ENCODE measurements at regions of chr1 and their contacts with region 1.

Region 1: GRCh38 chr1:153510984-153511410 is 24.8 kb downstream of the S100A6 start:
- DNase-seq: peak; percentile 89
- H3K4me3 ChIP-seq: no peak overlapping the region; a peak in 1 of 4 replicates
- H3K27ac ChIP-seq: peak overlapping the region in 1 of 2 experiments; percentile 9; a peak in 1 of 4 replicates
- H3K4me1 ChIP-seq: peaks cover 4 to 20% of the 10 kb centered on the region in 2 experiments; a peak in 3 of 4 replicates
- H3K27me3 ChIP-seq: no peaks in the 10 kb centered on the region
- CTCF ChIP-seq: peak; percentile 95
- EP300 ChIP-seq: no peak
- RAD21 ChIP-seq: peak; percentile 96

Region 2: GRCh38 chr1:153390938-153391710 is 119.9 kb before region 1 on chr1 and contains the start of gene S100A8:
- CTCF ChIA-PET with region 1: no interaction called
- POLR2A ChIA-PET with region 1: no interaction called
- DNase-seq: no peak
- H3K4me3 ChIP-seq: no peak within 1 kb of the TSS
- H3K27ac ChIP-seq: no peak within 1 kb of the TSS
- H3K4me1 ChIP-seq: no peaks in the 10 kb centered on the region
- H3K27me3 ChIP-seq: peaks cover 32% of the 10 kb centered on the region
- CTCF ChIP-seq: no peak
- EP300 ChIP-seq: no peak
- RAD21 ChIP-seq: no peak
- polyA plus RNA-seq, gene S100A8: not detected in 2 replicates

Region 3: DNA sequence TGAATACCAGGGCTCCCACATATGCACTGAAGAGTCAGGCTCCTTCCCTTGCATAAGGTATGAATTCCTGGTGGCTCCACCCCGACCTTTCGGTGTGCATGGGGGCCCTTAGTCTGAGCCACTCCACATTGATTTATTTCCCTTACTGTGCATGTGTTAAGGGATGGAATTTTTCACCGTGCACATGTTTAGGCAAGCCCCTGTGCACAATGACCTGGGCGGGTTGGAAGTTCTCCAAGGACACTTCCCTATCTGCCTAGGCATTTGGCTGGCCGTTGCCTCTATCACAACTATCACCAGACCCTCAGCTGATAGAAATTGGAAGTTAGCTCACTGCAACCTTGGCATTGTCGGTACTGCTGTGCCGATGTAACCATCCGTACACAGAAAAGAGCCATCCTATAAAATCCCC is 15.1 kb after region 1 on chr1:
- CTCF ChIA-PET with region 1: interaction called, 45 read pairs
- POLR2A ChIA-PET with region 1: no interaction called
- DNase-seq: no peak
- H3K4me3 ChIP-seq: no peak overlapping the region
- H3K27ac ChIP-seq: peak overlapping the region in 1 of 2 experiments; percentile 34; a peak in 1 of 4 replicates
- H3K4me1 ChIP-seq: peaks cover 7 to 21% of the 10 kb centered on the region in 2 experiments; a peak in 3 of 4 replicates
- H3K27me3 ChIP-seq: no peaks in the 10 kb centered on the region
- CTCF ChIP-seq: no peak
- EP300 ChIP-seq: peak in 1 of 2 experiments; percentile 32; a peak in 1 of 4 replicates
- RAD21 ChIP-seq: no peak

Region 4: DNA sequence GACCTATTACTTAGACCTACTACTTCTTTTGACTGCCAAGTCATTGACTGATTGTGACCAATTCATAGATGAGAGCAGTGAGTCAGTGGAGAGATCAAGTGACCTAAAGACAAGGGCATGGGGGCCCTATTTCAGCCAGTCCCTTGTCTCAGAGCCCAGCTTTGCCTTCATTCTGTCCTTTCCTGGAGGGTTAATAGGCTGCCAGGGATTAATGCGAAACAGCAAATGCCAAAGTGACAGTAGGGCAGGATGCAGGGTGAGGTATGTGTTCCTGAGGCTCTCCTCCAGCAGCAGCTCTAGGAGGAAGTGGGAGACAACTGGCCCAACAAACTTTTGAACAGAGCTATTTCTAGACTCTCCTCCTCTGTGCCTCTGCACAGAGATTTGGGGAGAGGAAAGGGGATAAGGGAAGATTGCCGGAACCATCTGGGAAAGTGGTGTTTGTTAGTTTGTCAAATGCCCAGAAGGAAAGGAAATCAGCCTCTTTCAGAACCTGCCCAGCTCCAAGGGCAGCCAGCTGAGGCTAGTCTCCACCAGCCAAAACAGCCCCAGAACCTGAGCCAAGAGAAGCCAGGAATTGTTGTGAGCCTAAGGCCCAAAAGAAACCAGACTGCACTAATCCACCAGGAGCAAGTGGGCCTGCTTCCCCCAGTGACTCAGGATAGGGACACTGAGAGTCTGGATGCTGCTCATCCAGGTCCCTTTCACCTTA is 43.0 kb after region 1 on chr1:
- CTCF ChIA-PET with region 1: interaction called, 16 read pairs
- POLR2A ChIA-PET with region 1: no interaction called
- DNase-seq: no peak
- H3K4me3 ChIP-seq: no peak overlapping the region
- H3K27ac ChIP-seq: peak overlapping the region; percentile 55 to 71
- H3K4me1 ChIP-seq: peaks cover 21 to 22% of the 10 kb centered on the region in 2 experiments; a peak in 3 of 4 replicates
- H3K27me3 ChIP-seq: no peaks in the 10 kb centered on the region
- CTCF ChIP-seq: no peak
- EP300 ChIP-seq: no peak
- RAD21 ChIP-seq: no peak

Region 5: DNA sequence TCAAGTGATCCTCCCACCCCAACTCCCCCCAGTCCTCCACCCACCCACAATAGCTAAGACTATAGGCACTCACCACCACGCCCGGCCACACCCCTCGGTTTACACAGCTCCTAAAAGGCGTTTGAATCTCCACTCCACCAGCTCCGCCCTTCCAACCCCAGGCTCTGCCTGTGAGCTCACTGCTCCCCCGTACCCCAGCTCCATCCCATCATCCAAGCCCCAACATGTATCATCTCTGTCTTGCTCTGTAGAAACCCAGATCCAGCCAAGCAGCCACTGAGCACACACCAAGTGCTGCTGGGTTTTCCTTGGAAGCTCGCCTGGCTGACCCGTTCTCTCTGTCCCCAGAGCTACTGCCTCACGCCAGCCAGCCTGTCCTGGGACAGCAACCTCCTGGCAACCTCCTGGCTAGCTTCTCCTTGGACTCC is 66.6 kb after region 1 on chr1:
- CTCF ChIA-PET with region 1: interaction called, 283 read pairs
- POLR2A ChIA-PET with region 1: no interaction called
- DNase-seq: no peak
- H3K4me3 ChIP-seq: no peak overlapping the region
- H3K27ac ChIP-seq: peak overlapping the region in 1 of 2 experiments; percentile 68; a peak in 2 of 4 replicates
- H3K4me1 ChIP-seq: peaks cover 0 to 23% of the 10 kb centered on the region in 2 experiments; a peak in 2 of 4 replicates
- H3K27me3 ChIP-seq: no peaks in the 10 kb centered on the region
- CTCF ChIP-seq: no peak
- EP300 ChIP-seq: no peak
- RAD21 ChIP-seq: no peak

Region 6: GRCh38 chr1:153626922-153627796 is 116.2 kb after region 1 on chr1 and contains the start of gene S100A13:
- CTCF ChIA-PET with region 1: interaction called, 13 read pairs
- POLR2A ChIA-PET with region 1: no interaction called
- DNase-seq: no peak
- H3K4me3 ChIP-seq: peak within 1 kb of the TSS in 1 of 2 experiments; percentile 43; a peak in 1 of 4 replicates
- H3K27ac ChIP-seq: no peak within 1 kb of the TSS
- H3K4me1 ChIP-seq: peaks cover 10 to 11% of the 10 kb centered on the region in 2 experiments; a peak in 2 of 4 replicates
- H3K27me3 ChIP-seq: no peaks in the 10 kb centered on the region
- CTCF ChIP-seq: peak; percentile 40; the same call in 1 of the 2 replicates
- EP300 ChIP-seq: no peak
- RAD21 ChIP-seq: no peak
- polyA plus RNA-seq, gene S100A13: 12.3 and 17.1 TPM in 2 replicates

Measured in SK-N-SH (cell line).